WTC11 (cell line): ENCODE measurements at regions of chr17 and their contacts with region 1.

Region 1: DNA sequence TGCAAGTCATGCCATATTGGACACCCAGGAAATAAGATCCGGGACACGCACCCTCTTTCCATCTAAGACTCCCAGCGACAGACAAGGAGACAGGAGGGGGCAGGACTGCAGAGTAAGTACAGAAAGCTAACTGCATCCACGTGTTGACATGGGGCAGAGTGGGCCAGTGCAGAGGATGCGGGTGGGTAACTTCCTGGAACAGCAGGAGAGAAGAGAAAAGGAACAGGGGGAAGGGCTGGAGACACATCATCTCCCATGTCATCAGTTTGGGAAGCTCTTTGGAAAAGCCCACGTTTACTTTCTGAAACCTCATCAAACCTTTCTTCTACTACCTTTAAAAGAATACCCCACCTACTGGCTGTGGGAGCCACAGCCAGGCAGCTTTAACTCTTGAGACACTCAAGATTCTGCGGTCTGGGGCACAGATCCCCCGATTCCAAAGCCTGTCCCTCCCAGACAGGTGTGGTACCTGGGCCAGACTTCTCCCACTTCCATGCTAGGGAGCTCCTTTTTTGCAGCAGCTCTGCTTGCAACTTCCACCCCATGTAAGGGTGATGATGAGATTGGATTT is 273.5 kb upstream of the RPL38 start:
- DNase-seq: no peak
- ATAC-seq: peak; percentile 67
- H3K4me3 Mint-ChIP-seq: no peak overlapping the region
- H3K27ac Mint-ChIP-seq: no peak overlapping the region
- H3K4me1 Mint-ChIP-seq: peaks cover 8% of the 10 kb centered on the region
- H3K27me3 Mint-ChIP-seq: peaks cover 17% of the 10 kb centered on the region
- CTCF ChIP-seq: no peak

Region 2: GRCh38 chr17:73952480-73953205 is 22.7 kb after region 1 on chr17:
- CTCF ChIA-PET with region 1: interaction called, 13 read pairs
- POLR2A ChIA-PET with region 1: no interaction called
- DNase-seq: peak; percentile 65
- ATAC-seq: peak; percentile 45
- H3K4me3 Mint-ChIP-seq: no peak overlapping the region
- H3K27ac Mint-ChIP-seq: no peak overlapping the region
- H3K4me1 Mint-ChIP-seq: peaks cover 5% of the 10 kb centered on the region
- H3K27me3 Mint-ChIP-seq: peaks cover 39% of the 10 kb centered on the region
- CTCF ChIP-seq: 0 out of 2 replicates have a peak, but pooled peaks have one; percentile 28